HEK293 (cell line): ENCODE measurements at regions of chr5 and their contacts with region 1.

Region 1: DNA sequence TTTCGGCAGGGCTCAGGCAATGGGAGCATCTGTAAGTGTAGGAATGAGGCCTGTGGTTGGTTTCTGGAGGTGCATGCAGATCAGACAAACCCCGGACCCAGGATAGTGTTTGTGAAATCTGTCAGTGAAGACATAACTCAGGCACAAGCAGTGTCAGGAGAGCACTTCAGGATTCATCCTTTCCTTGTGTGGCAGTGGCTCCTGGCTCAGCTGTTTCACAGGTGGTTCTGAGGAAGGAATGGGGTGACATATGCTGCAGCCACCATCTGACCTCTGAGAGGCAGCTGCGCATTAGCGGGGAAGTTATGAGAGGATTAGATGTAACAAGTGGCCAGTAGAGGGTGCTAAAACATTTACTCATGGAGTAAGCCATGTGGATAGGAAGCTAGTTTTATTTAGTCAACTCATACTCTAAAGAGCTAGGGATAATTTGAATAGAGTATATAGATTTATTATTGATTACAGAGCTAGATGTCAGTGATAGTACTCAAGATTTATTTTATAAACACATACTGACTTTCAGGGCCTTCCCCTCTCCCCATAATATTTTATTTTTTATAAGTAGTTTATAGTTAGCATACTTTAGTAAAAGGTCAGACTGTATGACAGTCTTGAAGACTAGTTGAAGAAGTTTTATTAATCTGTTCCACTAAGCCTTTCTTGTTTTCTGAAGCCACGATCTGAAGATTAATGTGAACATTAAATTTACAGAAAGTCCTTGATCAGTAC is 28.4 kb downstream of the NNT start:
- H3K4me3 ChIP-seq: no peak overlapping the region
- H3K27ac ChIP-seq: no peak overlapping the region
- H3K4me1 ChIP-seq: no peaks in the 10 kb centered on the region
- CTCF ChIP-seq: peak; percentile 63

Region 2: DNA sequence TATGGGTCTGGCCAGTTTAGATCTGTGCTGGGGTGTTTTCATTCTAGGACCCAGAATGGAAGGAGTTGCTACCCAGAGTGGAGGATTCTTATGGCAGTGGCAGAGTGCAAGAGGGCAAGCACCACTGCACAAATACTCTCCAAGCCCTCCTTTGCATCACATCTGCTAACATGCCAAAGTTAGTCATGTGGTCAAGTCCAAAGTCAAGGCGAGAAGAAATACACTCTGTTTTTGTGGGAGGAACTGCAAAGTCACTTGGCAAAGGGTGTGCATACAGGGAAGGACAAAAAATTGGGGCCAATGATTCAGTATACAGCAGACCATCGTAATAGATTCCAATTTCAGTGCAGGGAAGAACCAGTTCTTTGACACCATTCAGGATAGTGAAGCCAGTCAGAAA is 274.3 kb before region 1 on chr5:
- CTCF ChIA-PET with region 1: no interaction called
- POLR2A ChIA-PET with region 1: no interaction called
- H3K4me3 ChIP-seq: no peak overlapping the region
- H3K27ac ChIP-seq: no peak overlapping the region
- H3K4me1 ChIP-seq: no peaks in the 10 kb centered on the region
- CTCF ChIP-seq: no peak

Region 3: DNA sequence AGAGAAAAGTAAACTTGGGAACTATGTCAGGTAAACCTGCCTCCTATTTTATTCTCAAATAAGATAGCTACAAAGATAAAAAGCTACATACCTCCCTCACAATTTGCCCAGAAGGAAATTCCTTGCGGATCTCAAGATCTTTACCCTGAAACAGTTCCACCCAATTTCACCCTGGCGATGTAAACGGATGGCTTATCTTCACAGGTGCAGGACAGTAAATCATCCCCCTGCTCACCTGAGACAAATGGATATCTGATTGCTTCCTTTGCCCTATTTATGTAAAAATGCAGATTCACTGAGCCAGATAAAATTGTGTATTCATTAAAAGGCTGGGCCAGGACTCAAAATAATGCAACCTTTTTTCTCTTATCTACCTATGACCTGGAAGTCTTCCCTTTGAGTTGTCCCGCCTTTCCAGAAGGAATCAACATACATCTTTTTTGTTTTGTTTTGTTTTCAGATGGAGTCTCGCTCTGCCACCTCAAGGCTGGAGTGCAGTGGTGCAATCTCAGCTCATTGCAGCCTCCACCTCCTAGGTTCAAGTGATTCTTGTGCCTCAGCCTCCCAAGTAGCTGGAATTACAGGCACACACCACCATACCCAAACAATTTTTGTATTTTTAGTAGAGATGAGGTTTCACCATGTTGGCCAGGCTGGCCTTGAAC is 161.5 kb before region 1 on chr5:
- CTCF ChIA-PET with region 1: no interaction called
- POLR2A ChIA-PET with region 1: no interaction called
- H3K4me3 ChIP-seq: no peak overlapping the region
- H3K27ac ChIP-seq: no peak overlapping the region
- H3K4me1 ChIP-seq: no peaks in the 10 kb centered on the region
- CTCF ChIP-seq: no peak

Region 4: DNA sequence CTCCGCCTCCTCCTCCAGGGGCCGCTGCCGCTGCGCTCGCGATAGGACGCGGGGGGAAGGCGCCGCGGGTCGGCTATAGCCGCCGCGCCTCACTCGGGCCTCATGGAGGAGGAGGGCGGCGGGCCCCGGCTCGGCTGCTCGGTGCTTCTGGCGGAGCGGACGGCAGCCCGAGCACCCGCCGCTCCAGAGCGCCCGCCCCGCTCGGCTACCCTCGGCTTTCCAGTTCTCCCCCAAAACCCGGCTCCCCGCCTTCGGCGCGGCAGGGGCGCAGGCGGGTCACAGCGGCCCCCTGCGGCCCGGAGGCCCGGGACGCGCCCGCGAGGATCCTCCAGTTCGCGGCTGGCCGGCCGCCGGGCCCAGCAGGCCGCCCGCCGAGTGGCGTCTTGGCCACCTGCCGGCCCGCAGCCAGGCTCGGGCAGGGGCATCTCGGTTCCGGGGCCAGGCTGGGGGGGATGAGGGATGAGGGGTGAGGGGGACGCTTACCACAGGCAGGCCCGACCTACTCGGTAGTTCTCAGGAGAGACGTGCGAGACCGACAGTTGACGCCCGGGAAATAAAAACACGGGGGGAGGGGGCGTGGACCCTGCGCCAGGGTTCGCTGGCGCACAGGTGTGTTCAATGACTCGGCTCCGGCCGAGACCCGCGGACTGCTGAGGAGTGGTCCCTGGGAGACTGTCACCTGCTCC is 74.3 kb before region 1 on chr5 and contains the start of gene PAIP1:
- CTCF ChIA-PET with region 1: interaction called, 12 read pairs
- POLR2A ChIA-PET with region 1: no interaction called
- H3K4me3 ChIP-seq: peak within 1 kb of the TSS; percentile 100
- H3K27ac ChIP-seq: peak within 1 kb of the TSS; percentile 97
- H3K4me1 ChIP-seq: peaks cover 18% of the 10 kb centered on the region; the same call in 1 of the 2 replicates
- CTCF ChIP-seq: peak; percentile 39; the same call in 1 of the 2 replicates

Region 5: DNA sequence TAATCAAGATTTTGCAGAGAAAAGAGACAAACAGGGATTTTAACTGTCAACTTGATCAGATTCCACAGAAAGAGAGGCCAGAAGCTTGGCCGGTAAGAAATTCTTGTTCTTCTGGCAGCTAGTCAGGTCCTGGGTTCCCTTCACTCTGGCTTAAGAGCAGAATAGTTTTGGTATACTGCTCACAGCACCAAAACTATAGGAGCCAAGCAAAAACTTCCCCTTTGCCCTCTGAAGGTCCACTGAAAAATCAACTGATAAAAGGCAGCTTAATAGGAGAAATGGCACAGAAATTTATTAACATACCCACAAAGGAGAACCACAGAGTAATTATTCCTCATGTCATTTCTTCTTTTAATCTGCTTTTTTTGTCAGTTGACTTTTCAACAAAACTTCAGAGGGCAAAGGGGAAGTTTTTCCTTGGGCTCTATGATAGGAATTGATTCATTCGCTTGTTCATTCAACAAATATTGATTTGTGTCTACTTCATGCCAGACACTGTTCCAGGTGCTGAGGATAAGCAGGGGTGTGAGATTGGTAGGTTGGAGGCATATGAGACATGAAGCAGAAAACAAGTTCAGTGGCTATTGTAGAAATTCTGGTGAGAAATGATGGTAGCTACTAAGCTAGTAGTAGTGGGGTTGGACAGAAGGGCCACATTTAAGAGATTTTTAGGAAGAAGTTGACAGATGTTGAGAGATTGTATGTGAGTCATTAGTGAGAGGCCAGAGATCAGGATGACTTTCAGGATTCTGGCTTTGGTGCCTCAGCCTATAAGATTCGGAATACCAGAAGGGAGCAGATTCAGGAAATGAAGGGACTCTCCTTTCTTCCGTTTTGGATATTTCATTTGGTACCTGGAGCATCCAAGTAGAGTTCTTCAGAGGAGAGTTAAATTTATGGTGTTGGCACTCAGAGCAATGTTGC is 49.0 kb before region 1 on chr5:
- CTCF ChIA-PET with region 1: no interaction called
- POLR2A ChIA-PET with region 1: no interaction called
- H3K4me3 ChIP-seq: no peak overlapping the region
- H3K27ac ChIP-seq: no peak overlapping the region
- H3K4me1 ChIP-seq: no peaks in the 10 kb centered on the region
- CTCF ChIP-seq: no peak

Region 6: DNA sequence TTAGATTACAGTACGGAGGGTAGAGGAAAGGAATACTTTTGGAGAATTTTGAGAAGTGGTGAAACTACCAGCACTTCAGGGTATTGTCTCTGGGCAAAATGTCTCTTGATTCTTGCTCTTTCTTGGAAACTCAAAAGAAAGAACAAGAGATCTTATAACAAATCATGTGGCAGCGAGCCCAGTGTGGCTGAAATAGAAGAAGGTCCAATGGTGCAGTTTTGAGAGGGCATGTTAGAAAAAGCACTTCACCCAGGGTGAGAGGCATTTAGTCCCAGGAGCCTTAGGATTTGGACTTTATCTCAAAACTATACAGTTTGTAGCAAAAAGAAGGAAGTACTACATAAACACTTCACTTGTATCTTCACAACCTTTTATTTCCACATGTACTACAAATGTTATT is 11.1 kb after region 1 on chr5:
- CTCF ChIA-PET with region 1: interaction called, 31 read pairs
- POLR2A ChIA-PET with region 1: interaction called, 4 read pairs
- H3K4me3 ChIP-seq: no peak overlapping the region
- H3K27ac ChIP-seq: no peak overlapping the region
- H3K4me1 ChIP-seq: no peaks in the 10 kb centered on the region
- CTCF ChIP-seq: no peak

Region 7: GRCh38 chr5:43711176-43711895 is 80.0 kb after region 1 on chr5:
- CTCF ChIA-PET with region 1: interaction called, 10 read pairs
- POLR2A ChIA-PET with region 1: no interaction called
- H3K4me3 ChIP-seq: no peak overlapping the region
- H3K27ac ChIP-seq: no peak overlapping the region
- H3K4me1 ChIP-seq: no peaks in the 10 kb centered on the region
- CTCF ChIP-seq: no peak

Region 8: DNA sequence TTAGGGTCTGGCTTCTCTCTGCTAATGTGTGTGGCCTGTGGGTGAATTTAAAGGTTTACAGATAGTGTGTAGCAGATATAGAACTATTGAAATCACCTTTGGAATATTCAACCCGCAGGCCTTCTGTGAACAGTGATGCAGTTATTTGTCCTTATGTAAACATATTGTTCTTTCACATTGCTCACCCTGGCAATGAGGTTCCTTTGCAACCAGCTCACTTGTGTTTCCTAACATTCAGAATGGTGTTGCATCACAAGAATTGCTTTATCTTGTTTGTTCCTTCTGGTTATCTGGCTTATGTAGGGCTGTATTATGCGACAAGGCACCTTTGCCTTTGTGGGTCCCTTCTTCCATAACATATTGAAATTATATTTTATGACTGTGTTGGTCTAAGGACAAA is 342.0 kb after region 1 on chr5:
- CTCF ChIA-PET with region 1: no interaction called
- POLR2A ChIA-PET with region 1: no interaction called
- H3K4me3 ChIP-seq: no peak overlapping the region
- H3K27ac ChIP-seq: no peak overlapping the region
- H3K4me1 ChIP-seq: no peaks in the 10 kb centered on the region
- CTCF ChIP-seq: no peak

Region 9: DNA sequence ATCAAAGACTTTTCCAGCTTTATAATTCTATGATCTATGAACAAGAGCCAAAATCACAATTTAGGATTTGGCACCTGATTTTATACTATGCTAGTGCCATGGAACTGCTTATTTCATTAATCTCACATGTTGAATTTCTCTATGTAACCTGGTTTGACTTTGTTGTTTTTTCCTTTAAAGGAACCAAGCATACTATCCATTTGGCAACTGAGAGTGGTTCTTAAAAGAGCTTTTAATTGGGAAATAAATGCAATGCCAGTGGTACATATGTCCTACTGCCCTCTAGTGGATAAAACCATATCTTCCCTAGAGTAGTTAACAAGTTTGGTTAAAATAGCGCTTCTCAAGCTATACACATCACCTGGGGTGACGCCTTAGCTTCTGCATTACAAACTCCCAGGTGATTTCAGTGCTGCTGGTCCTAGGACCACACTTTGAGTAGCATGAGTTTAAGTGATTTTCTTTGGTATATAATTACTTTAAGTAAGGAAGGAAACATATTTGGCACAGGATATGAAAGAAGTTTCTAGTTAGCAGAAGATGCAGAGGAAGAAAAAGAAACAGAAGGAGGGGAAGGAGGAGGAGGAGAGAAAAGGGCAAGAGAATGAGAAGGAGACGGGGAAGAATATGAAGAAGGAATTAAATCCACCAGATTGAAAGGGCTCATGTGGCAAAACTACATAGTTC is 701.1 kb after region 1 on chr5:
- CTCF ChIA-PET with region 1: interaction called, 12 read pairs
- POLR2A ChIA-PET with region 1: no interaction called
- H3K4me3 ChIP-seq: no peak overlapping the region
- H3K27ac ChIP-seq: no peak overlapping the region
- H3K4me1 ChIP-seq: no peaks in the 10 kb centered on the region
- CTCF ChIP-seq: no peak